ENCODE measurements at regions of chr2 and their contacts with region 1.

Region 1: DNA sequence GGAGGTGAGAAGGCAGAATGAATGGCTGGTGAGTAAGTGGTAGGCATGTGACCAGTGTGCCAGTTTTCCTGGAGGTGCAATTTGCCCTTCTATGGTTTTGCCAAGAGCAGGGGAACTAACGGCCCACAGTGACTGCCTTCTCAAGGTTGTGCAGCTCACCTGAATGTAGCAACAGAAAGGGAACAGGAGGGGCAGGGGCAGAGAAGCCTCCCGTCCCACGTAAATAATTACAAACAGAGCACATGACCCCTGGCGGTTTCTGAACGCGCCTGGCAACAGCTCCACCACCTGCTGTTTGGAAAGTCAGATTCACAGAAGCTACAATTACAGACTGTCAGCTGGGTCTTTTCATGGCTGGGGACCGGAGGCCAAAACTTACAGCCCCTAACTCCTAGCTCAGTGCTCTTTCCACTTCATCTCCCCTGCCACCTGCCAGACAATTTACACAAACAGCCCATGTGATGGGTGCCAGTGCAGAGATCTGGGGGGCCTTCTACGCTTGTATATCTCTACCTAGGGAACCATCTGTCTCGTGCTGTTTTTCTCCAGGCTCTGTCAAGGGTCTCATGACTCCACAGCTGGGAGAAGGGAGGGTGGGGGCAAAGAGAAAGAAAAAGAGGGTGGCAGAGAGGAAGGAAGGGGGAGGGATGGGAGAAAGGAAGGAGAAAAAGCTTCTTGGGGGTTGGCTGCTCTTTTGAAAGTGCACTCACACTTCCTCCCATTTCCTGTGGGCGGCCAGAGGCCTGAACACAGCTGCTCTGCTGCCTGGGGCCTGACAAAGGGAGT is 69.6 kb downstream of the POLR1A start:
- DNase-seq: peak; percentile 79
- ATAC-seq: peak; percentile 69 to 84

Region 2: GRCh38 chr2:86072271-86072858 is 36.3 kb after region 1 on chr2:
- intact Hi-C with region 1: loop called in 1 of 2 experiments (anchors 5 kb)
- DNase-seq: peak; percentile 87
- ATAC-seq: peak; percentile 89 to 91